Dendritic cell treated with granulocyte-macrophage colony-stimulating factor and Interleukin-4, amounts not matched to agents 40 ng/mL and 50 ng/mL, for 4 days (primary cell): ENCODE measurements at regions of chr6 and their contacts with region 1.

Region 1: GRCh38 chr6:10603219-10603618 is 82.1 kb downstream of the GCNT2 start:
- H3K4me3 Mint-ChIP-seq: no peak overlapping the region
- H3K27ac Mint-ChIP-seq: no peak overlapping the region
- H3K4me1 Mint-ChIP-seq: peaks cover 28% of the 10 kb centered on the region
- H3K27me3 Mint-ChIP-seq: no peaks in the 10 kb centered on the region

Region 2: GRCh38 chr6:10643201-10643651 is 40.0 kb after region 1 on chr6:
- intact Hi-C with region 1: loop called (anchors 5 kb)
- H3K4me3 Mint-ChIP-seq: no peak overlapping the region
- H3K27ac Mint-ChIP-seq: peak overlapping the region; percentile 2
- H3K4me1 Mint-ChIP-seq: peaks cover 40% of the 10 kb centered on the region
- H3K27me3 Mint-ChIP-seq: peaks cover 7% of the 10 kb centered on the region

Region 3: DNA sequence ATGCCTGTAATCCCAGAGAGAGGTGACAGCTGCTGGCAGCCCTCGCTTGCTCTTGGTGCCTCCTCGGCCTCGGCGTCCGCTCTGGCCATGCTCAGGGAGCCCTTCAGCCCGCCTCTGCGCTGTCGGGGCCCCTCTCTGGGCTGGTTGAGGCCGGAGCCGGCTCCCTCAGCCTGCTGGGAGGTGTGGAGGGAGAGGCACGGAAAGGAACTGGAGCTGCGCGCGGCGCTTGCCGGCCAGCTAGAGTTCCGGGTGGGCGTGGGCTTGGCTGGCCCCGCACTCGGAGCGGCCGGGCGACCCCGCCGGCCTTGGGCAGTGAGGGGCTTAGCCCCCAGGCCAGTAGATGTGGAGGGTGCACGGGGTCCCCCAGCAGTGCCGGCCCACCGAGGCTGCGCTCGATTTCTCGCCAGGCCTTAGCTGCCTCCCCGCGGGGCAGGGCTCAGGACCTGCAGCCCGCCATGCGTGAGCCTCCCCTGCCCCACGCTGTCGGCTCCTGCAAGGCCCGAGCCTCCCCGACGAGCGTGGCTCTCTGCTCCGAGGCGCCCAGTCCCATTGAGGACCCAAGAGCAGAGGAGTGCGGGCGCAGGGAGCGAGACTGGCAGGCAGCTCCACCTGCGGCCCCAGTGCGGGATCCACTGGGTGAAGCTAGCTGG is 56.6 kb after region 1 on chr6:
- intact Hi-C with region 1: no loop called
- H3K4me3 Mint-ChIP-seq: peak overlapping the region; percentile 69
- H3K27ac Mint-ChIP-seq: peak overlapping the region; percentile 69
- H3K4me1 Mint-ChIP-seq: peaks cover 11% of the 10 kb centered on the region
- H3K27me3 Mint-ChIP-seq: no peaks in the 10 kb centered on the region